AG04449 (cell line): ENCODE measurements at regions of chr18 and their contacts with region 1.

Region 1: GRCh38 chr18:45664824-45665763 is 49.8 kb downstream of the SLC14A2 start:
- DNase-seq: no peak
- H3K4me3 ChIP-seq: no peak overlapping the region
- CTCF ChIP-seq: peak; percentile 83

Region 2: GRCh38 chr18:45621061-45621511 is 44.0 kb before region 1 on chr18:
- CTCF ChIA-PET with region 1: interaction called, 15 read pairs
- POLR2A ChIA-PET with region 1: no interaction called
- DNase-seq: no peak
- H3K4me3 ChIP-seq: no peak overlapping the region
- CTCF ChIP-seq: peak; percentile 91

Region 3: DNA sequence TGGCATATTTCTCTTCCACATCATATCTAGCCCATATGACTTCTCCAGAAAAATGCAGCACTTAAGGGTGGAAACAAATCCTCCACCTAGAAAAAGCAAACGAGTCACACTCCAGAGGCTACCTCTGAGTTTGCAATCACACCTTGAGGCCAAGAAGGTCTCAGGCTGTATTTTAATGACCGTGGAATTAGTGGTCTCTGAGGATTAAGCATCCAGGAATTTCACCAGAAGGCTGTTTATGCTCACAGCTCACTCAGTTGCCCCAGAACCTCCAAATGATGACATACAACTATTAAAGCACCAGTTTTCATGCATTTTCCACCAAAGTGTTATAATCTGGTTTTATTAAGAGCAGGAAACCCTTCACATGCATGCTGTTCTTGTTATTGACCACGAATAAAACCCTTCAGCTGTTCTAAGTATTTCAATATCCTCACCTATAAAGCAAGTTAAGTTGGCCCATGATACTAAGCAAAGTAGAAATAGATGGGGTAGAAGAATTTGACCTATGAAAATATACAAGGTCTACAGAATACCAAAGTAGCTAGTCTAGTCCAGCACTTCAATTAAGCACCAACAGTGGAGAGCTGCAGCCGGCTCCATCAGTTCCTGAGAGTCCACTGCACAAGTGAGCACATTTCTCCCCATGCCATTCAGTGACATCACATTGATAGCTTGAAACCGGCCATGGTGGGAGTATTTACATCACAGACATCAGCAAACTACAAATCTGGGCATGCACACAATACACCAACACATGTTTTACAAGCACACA is 19.4 kb after region 1 on chr18:
- CTCF ChIA-PET with region 1: interaction called, 84 read pairs
- POLR2A ChIA-PET with region 1: interaction called, 3 read pairs
- DNase-seq: no peak
- H3K4me3 ChIP-seq: no peak overlapping the region
- CTCF ChIP-seq: no peak

Region 4: DNA sequence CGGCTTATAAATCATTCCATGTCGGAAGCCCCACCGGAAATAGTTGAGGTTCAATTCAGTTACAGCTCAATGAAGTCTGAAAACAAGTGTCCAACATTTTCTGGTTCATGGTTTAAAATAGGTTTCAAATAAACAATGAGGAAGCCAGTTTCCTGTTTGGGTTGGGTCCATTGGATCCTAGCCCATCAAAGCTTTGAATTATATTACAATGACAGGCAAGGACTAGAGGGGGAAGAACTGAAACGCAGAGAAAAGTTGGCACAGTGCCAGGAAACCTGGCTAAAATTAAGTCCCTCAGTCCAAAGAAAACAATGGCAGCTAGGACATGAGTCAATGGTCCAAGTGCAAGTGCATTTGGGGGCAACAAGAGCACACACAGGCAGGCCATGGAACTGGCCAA is 90.8 kb after region 1 on chr18:
- CTCF ChIA-PET with region 1: no interaction called
- POLR2A ChIA-PET with region 1: no interaction called
- DNase-seq: no peak
- H3K4me3 ChIP-seq: no peak overlapping the region
- CTCF ChIP-seq: no peak

Region 5: DNA sequence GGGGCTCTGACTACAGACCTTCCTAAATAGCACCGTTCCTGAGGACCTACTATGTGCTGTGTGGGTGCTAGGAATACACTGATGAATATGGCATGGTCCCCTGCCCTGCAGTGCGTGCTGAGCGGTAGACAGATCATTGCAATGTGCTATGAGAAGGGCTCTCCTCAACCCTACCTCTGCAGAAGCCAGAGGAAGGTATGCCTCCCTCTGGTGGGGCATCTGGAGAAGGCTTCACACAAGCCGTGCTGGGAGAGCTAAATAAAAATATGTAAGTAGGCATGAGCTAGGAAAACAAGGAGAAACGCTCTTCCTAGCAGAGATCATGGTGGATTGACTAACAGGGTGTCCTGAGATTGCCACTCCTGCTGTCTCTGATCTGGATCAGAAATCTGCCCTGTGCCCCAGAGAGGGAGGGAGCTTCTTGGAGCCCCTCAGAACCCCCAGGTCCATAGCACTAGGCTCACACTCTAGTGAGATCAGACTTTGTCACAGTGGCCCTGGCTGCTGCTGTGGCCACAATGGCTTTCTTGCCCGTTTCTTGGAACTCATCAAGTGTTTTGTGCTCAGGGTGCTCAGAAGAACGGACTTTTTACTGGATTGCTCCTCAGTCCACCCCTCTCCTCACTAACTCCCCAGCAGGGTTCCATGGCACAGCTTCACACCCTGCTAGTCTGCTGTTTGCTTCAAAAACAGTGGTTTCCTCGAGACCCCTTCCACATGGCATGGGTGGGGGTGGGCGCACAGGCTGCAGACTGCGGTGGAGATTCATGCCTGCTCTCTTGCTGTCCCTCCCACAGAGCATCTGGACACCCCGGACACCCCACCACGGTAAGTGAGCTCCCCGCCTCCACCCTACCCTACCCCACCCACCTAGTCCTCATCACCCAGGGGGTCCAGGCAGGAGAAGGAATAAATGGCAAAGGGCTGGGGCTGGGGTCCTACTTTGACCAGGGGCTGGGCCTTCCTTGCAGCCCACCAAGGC is 174.6 kb after region 1 on chr18:
- CTCF ChIA-PET with region 1: interaction called, 74 read pairs
- POLR2A ChIA-PET with region 1: no interaction called
- DNase-seq: no peak
- H3K4me3 ChIP-seq: no peak overlapping the region
- CTCF ChIP-seq: peak; percentile 81

Region 6: DNA sequence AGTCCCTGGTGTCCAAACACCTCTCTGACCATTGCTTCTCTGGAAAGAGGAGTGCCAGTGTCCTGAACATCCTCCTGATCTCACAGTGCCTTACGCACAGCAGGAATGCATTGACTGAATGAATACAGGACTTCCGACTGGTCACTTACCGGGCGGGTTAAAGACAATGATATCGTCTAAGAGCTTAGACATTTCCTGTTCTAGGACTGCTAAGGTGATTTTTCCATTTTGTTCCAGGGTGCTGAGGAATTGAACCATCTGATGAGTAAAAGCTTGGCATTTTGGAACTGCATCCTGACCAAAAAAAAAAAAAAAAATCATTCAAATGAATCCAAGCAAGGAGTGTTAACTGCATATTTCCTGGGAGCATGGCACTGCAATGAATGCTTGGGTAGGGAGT is 200.4 kb after region 1 on chr18:
- CTCF ChIA-PET with region 1: interaction called, 29 read pairs
- POLR2A ChIA-PET with region 1: no interaction called
- DNase-seq: no peak
- H3K4me3 ChIP-seq: no peak overlapping the region
- CTCF ChIP-seq: no peak

Region 7: DNA sequence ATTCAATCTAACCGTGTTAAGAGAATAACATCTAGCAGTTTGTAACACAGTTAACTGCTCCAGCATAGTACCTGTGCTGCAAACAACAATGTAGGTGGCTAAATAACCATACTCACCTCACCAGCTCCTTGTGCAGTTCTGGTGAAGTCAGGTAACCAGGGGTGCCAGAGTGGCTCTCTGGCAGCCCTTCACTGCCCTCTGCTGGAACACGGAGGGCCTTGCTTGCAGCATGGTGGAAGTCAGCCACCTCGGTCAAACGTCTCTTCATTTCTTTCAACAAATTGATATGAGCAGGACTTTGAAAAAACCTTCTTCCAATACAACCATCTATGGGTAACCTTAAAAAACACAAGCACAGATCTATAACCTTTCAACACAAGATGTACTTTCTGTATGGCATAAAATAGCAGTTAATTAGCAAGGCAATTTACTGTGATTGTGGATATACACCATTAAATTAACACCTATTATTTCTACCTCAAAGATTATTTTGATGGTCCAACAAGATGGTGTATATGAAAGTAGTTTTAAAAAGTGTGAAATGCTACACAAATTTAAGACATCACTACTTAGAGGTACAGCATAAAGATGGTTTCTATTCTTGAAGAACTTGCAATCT is 245.4 kb after region 1 on chr18:
- CTCF ChIA-PET with region 1: interaction called, 94 read pairs
- POLR2A ChIA-PET with region 1: no interaction called
- DNase-seq: no peak
- H3K4me3 ChIP-seq: no peak overlapping the region
- CTCF ChIP-seq: peak; percentile 82